ENCODE measurements at regions of chr5 and their contacts with region 1.

Region 1: DNA sequence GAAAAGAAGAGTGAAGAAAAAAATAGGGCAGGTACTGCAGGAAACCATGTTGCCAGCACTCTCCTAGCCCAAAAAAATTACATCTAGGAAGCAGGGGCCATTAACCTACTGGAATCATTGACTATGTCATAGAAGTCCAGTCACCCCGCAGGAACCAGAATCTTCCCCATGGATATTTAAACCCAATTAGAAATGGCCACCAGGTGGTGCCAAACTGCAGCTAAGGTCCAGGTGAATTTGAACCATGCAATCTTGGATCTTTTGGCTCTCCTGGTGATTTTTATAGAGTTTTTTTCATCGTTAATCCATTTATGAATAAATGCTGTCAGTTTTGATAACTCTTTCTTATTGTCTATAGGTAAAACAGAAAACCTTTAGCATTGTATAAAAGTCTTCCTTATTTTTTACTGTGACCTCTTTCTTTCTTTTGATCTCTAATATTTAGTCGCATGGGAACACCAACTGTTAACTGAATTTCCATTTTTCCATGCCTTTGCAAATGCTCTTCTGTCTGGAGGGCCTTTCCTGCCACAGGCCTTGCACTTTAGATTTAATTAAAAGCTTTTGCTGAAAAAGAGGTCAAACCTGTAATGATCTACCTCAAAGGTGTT is 147.5 kb upstream of the FGF10 start:
- DNase-seq: peak; percentile 53
- ATAC-seq: peak; percentile 69
- H3K4me3 ChIP-seq: no peak overlapping the region
- H3K27ac ChIP-seq: no peak overlapping the region
- H3K4me1 ChIP-seq: no peaks in the 10 kb centered on the region
- H3K27me3 ChIP-seq: no peaks in the 10 kb centered on the region
- CTCF ChIP-seq: peak; percentile 59 to 83 (median 64); a peak in 5 of 6 replicates
- POLR2A ChIP-seq: no peak
- RAD21 ChIP-seq: peak; percentile 78

Region 2: DNA sequence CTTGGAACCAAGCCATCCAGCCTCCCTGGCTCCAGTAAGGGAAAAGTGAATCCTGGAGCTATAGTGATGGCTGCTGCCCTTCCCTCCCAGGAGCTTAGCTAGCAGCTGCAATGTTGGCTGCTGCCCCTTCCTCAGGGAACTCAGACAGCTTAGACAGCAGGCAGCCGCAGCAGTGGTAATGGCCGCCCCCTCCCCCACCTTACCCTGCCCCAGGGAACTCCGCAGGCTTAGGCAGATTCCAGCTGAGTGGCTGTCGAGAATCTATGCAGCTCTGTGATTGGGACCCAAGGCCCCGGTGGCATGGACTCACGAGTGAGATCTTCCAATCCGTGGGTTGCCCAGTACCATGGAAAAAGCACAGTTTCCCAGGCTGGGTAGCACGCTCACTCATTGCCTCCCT is 555.2 kb before region 1 on chr5:
- CTCF ChIA-PET with region 1: no interaction called
- POLR2A ChIA-PET with region 1: no interaction called
- RAD21 ChIA-PET with region 1: no interaction called
- intact Hi-C with region 1: no loop called
- DNase-seq: no peak
- ATAC-seq: no peak
- H3K4me3 ChIP-seq: no peak overlapping the region
- H3K27ac ChIP-seq: no peak overlapping the region
- H3K4me1 ChIP-seq: no peaks in the 10 kb centered on the region
- H3K27me3 ChIP-seq: no peaks in the 10 kb centered on the region
- CTCF ChIP-seq: no peak
- POLR2A ChIP-seq: no peak
- RAD21 ChIP-seq: no peak

Region 3: DNA sequence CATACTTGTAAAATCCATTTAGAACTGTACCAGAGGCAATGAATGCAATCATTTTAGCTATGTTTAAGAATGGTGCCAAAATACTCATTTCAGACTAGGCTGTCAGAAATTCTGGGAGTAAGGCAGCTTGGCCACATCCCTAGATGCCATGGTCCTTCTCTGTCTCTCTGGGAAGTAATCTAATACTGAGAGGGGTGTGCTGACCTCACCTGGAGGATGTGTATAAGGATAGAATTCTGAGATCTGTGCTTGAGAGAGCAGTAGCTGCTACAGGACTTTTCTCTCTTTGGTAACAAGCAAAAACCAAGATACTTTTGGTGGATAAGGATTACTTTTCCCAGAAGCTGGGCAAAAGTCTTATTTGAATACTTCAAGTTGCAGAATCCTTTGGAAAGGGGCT is 203.9 kb after region 1 on chr5:
- CTCF ChIA-PET with region 1: interaction called, 3 read pairs
- POLR2A ChIA-PET with region 1: no interaction called
- RAD21 ChIA-PET with region 1: no interaction called
- intact Hi-C with region 1: loop called (anchors 10 kb)
- DNase-seq: no peak
- ATAC-seq: peak; percentile 61; the same call in 1 of the 2 replicates
- H3K4me3 ChIP-seq: no peak overlapping the region
- H3K27ac ChIP-seq: no peak overlapping the region
- H3K4me1 ChIP-seq: no peaks in the 10 kb centered on the region
- H3K27me3 ChIP-seq: no peaks in the 10 kb centered on the region
- CTCF ChIP-seq: no peak
- POLR2A ChIP-seq: no peak
- RAD21 ChIP-seq: peak; percentile 50

Measured in HCT116 (cell line).